Activated CD4-positive, alpha-beta T cell treated with anti-CD3 and anti-CD28 coated beads for 36 hours (primary cell): ENCODE measurements at regions of chr7 and their contacts with region 1.

Region 1: GRCh38 chr7:129433847-129434674 is at the start of gene STRIP2:
- DNase-seq: peak; percentile 96
- ATAC-seq: peak; percentile 80
- H3K4me3 Mint-ChIP-seq: peak within 1 kb of the TSS; percentile 90
- H3K27ac Mint-ChIP-seq: peak within 1 kb of the TSS; percentile 91
- H3K4me1 Mint-ChIP-seq: peaks cover 33% of the 10 kb centered on the region
- H3K27me3 Mint-ChIP-seq: peaks cover 7% of the 10 kb centered on the region
- total RNA-seq, gene STRIP2: 41.3 to 51.8 TPM

Region 2: GRCh38 chr7:128455551-128456254 is 978.4 kb before region 1 on chr7 and contains the start of gene HILPDA:
- CTCF ChIA-PET with region 1: no interaction called
- POLR2A ChIA-PET with region 1: no interaction called
- intact Hi-C with region 1: loop called in 1 of 2 experiments (anchors 2 kb)
- DNase-seq: peak; percentile 98
- ATAC-seq: peak; percentile 81
- H3K4me3 Mint-ChIP-seq: peak within 1 kb of the TSS; percentile 83
- H3K27ac Mint-ChIP-seq: peak within 1 kb of the TSS; percentile 99
- H3K4me1 Mint-ChIP-seq: peaks cover 60% of the 10 kb centered on the region
- H3K27me3 Mint-ChIP-seq: peaks cover 8% of the 10 kb centered on the region
- total RNA-seq, gene HILPDA: 227 to 309 TPM

Region 3: GRCh38 chr7:129054438-129055293 is 379.4 kb before region 1 on chr7 and contains the start of gene TNPO3:
- CTCF ChIA-PET with region 1: no interaction called
- POLR2A ChIA-PET with region 1: no interaction called
- intact Hi-C with region 1: loop called in 1 of 2 experiments (anchors 10 kb)
- DNase-seq: peak; percentile 94
- ATAC-seq: peak; percentile 91
- H3K4me3 Mint-ChIP-seq: peak within 1 kb of the TSS; percentile 89
- H3K27ac Mint-ChIP-seq: peak within 1 kb of the TSS; percentile 99
- H3K4me1 Mint-ChIP-seq: peaks cover 28% of the 10 kb centered on the region
- H3K27me3 Mint-ChIP-seq: peaks cover 3% of the 10 kb centered on the region
- total RNA-seq, gene TNPO3: 57.7 to 60.5 TPM

Region 4: GRCh38 chr7:129389829-129390228 is 44.2 kb before region 1 on chr7:
- CTCF ChIA-PET with region 1: no interaction called
- POLR2A ChIA-PET with region 1: no interaction called
- intact Hi-C with region 1: no loop called
- DNase-seq: no peak
- ATAC-seq: no peak
- H3K4me3 Mint-ChIP-seq: no peak overlapping the region
- H3K27ac Mint-ChIP-seq: no peak overlapping the region
- H3K4me1 Mint-ChIP-seq: peaks cover 9% of the 10 kb centered on the region
- H3K27me3 Mint-ChIP-seq: no peaks in the 10 kb centered on the region

Region 5: DNA sequence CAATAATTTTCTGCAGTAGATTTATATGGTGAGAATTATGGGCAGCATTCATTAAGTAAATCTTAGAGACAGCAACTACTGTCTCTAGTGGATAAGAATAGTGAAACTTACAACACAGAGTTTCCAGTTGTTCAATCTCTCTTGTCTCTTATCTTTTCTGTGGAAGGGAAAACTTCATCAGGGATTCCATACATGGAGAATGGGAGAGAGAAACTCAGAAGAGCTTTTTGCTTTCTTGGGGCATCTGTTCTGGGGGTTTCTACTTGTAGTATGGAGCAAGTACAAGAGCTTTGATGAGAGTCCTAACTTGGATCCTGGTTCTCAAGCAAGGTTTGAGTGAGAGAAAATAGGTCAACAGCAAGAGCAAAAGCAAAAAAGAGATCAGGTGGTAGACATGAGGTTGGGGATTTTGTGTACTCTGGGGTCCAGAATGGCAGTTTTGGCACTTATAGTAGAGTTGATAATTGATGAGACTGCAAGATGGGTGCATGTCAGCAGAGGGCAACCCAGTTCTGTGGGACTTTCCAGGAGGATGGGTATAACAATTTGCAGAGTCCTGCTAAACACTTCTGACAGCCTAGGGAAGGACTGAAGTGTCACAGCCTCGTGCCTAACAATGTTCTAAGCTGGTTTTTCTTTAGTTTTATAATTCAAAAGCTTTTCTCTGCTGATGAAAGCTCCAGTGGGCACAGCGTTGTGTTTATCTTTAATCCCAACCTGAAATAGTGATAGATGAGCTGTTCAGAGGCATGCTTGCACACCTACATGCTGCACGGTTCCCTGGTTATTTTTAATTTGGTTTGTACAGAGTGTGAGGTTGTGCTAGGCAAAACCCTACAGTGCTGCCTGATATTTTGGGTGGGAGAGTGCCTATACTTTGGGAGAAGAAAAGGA is 31.8 kb before region 1 on chr7:
- CTCF ChIA-PET with region 1: no interaction called
- POLR2A ChIA-PET with region 1: no interaction called
- intact Hi-C with region 1: loop called (anchors 2 to 5 kb)
- DNase-seq: peak; percentile 61
- ATAC-seq: peak; percentile 86
- H3K4me3 Mint-ChIP-seq: no peak overlapping the region
- H3K27ac Mint-ChIP-seq: peak overlapping the region; percentile 9
- H3K4me1 Mint-ChIP-seq: peaks cover 33% of the 10 kb centered on the region
- H3K27me3 Mint-ChIP-seq: no peaks in the 10 kb centered on the region

Region 6: DNA sequence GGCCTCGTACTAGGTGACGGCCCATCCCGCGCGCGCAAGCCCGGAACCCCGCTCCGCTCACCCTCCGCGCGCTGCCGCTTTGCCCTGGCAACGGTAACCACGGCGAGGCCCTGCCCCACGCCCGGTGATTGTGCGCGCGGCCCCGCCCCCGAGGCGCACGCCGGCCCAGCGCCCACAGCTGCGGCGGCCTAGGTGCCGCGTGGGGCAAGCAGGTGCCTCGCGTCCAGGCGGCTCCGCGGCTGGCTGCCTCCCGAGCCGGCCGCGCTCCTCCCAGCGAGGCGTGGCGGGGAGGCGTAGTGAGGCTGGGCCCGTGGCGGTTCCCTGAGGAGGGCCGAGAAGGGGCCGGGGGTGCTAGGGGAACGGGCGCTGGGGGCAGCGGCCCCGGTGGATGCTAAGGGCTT is 68.3 kb after region 1 on chr7 and contains the start of gene SMKR1:
- CTCF ChIA-PET with region 1: no interaction called
- POLR2A ChIA-PET with region 1: interaction called, 4 read pairs
- intact Hi-C with region 1: loop called in 1 of 2 experiments (anchors 2 kb)
- DNase-seq: peak; percentile 91
- ATAC-seq: peak; percentile 95
- H3K4me3 Mint-ChIP-seq: peak within 1 kb of the TSS; percentile 71
- H3K27ac Mint-ChIP-seq: peak within 1 kb of the TSS; percentile 73
- H3K4me1 Mint-ChIP-seq: peaks cover 11% of the 10 kb centered on the region
- H3K27me3 Mint-ChIP-seq: no peaks in the 10 kb centered on the region
- total RNA-seq, gene SMKR1: 2.3 to 2.7 TPM

Region 7: DNA sequence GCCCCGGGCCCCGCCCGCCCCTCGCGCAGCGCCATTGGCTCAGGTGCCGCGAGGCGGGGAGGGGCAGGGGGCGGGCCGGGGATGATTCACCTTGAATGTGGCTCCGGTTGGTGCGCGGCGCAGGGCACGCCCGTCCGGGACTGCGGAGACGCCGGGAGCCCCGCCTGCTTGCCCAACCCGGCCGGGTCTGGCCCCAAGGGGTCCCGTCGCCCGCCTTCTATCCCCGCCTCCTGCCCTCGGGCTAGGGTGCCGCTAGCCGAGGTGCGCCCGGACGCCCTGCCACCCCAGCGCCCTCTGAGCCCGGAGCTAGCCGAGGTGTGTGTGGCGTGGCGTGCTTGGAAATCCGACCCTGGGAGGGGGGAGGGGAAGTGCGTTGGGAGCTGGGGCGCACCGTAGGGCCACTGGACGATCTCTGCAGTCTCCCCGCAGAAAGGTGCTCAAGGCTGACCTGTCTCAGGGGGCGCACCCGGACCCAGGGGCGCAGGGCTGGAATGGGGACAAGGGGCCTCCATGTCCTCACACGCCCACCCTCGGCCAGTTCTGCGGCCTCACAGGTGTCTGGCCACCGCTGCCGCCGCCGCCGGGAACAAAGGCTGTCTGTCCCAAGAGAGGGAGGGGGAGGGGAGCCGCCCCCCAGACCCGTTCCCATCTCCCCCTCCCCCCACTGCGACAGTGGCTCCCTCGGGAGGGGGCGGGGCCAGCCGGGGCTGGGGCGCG is 346.4 kb after region 1 on chr7:
- CTCF ChIA-PET with region 1: no interaction called
- POLR2A ChIA-PET with region 1: no interaction called
- intact Hi-C with region 1: loop called in 1 of 2 experiments (anchors 5 kb)
- DNase-seq: peak; percentile 92
- ATAC-seq: peak; percentile 82
- H3K4me3 Mint-ChIP-seq: peak overlapping the region; percentile 66
- H3K27ac Mint-ChIP-seq: no peak overlapping the region
- H3K4me1 Mint-ChIP-seq: peaks cover 33% of the 10 kb centered on the region
- H3K27me3 Mint-ChIP-seq: peaks cover 58% of the 10 kb centered on the region

Region 8: GRCh38 chr7:130182990-130183389 is 748.9 kb after region 1 on chr7:
- CTCF ChIA-PET with region 1: no interaction called
- POLR2A ChIA-PET with region 1: no interaction called
- intact Hi-C with region 1: loop called in 1 of 2 experiments (anchors 5 kb)
- DNase-seq: no peak
- ATAC-seq: peak; percentile 38
- H3K4me3 Mint-ChIP-seq: no peak overlapping the region
- H3K27ac Mint-ChIP-seq: peak overlapping the region; percentile 72
- H3K4me1 Mint-ChIP-seq: peaks cover 33% of the 10 kb centered on the region
- H3K27me3 Mint-ChIP-seq: no peaks in the 10 kb centered on the region